ENCODE measurements at regions of chr16 and their contacts with region 1.

Region 1: DNA sequence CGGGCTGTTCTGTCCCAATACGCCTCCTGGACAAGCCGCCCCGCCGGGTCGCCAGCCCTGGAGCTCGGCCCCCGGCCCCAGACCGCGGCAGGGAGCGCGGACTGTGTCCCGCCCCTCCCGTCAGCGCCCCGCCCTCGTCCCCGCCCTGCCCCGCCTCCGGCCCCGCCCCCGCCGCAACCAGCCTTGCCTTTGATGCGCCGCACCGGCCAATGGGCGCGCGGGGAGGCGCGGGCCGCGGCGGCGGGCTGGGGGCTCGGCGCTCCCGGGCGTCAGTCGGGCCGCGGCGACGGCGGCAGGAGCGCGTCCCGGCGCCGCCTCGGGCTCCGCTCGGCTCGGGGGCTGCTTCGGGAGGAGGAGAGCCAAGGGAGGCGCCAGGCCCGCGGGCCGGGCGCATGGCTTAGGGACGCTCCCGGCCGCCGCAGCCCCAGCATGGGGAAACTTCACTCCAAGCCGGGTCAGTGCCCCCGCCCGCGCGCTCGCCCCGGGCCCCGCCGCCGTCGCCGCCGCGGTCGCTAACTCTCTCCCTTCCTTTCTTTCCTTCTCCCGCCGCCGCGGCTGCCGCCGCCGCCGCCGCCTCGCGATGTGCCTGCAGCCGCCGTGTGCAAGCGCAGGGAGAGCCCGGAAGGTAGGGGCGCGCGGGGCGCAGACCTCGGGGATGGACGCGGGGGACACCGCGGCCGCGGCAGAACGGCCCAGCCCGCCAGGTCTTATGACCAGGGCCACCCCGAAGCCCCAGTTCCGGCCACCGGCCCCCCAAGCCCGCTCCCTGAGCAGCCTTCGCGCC is at the start of gene NKD1:
- DNase-seq: peak; percentile 87
- ATAC-seq: peak; percentile 84
- H3K4me3 Mint-ChIP-seq: peak within 1 kb of the TSS; percentile 81
- H3K27ac Mint-ChIP-seq: no peak within 1 kb of the TSS
- H3K4me1 Mint-ChIP-seq: peaks cover 28% of the 10 kb centered on the region
- H3K27me3 Mint-ChIP-seq: no peaks in the 10 kb centered on the region
- total RNA-seq, gene NKD1: 1.8 to 3.1 TPM

Region 2: GRCh38 chr16:50065624-50066481 is 482.5 kb before region 1 on chr16 and contains the start of gene HEATR3:
- CTCF ChIA-PET with region 1: no interaction called
- POLR2A ChIA-PET with region 1: no interaction called
- intact Hi-C with region 1: loop called in 1 of 2 experiments (anchors 1 kb)
- DNase-seq: peak; percentile 97
- ATAC-seq: peak; percentile 86
- H3K4me3 Mint-ChIP-seq: peak within 1 kb of the TSS; percentile 87
- H3K27ac Mint-ChIP-seq: peak within 1 kb of the TSS; percentile 88
- H3K4me1 Mint-ChIP-seq: peaks cover 33% of the 10 kb centered on the region
- H3K27me3 Mint-ChIP-seq: no peaks in the 10 kb centered on the region
- total RNA-seq, gene HEATR3: 22.2 to 28.7 TPM

Region 3: DNA sequence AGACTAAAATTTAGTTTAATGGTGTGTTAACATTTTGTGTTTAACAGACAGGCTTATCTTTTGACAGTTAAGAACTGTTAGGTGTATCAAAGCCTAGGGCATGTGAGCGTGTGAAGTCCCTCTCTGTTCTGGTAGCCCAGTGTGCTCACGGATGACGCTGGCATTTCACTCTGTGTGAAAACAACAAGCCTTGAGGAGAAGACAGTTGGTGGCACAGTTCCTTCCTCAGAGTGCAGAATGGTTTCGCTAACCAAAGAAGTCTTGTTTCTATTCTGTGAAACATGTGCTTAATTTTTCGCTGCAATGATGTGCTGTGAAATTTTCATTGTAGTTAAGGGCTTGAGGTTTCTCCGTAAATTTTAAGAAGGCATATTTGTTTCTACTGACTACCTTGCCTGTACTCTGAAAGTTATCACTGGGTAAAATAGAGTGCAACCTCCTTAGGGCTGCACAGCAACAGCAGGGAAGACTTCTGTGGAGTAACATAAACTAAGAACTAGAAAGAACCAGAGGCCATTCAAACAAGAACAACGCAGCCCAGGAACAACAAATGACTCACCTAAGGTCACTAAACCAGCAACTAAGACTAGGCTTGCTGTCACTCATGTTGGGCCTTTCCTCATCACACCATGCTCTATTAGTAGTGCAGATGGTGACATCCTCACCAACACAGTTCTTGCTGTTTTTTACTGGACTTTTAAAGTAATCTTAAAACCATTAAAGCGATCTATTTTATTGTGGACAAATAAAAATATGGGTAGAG is 212.9 kb before region 1 on chr16:
- CTCF ChIA-PET with region 1: no interaction called
- POLR2A ChIA-PET with region 1: no interaction called
- intact Hi-C with region 1: loop called in 1 of 2 experiments (anchors 1 kb)
- DNase-seq: peak; percentile 74
- ATAC-seq: peak; percentile 65
- H3K4me3 Mint-ChIP-seq: peak overlapping the region; percentile 41
- H3K27ac Mint-ChIP-seq: peak overlapping the region; percentile 94
- H3K4me1 Mint-ChIP-seq: peaks cover 73% of the 10 kb centered on the region
- H3K27me3 Mint-ChIP-seq: no peaks in the 10 kb centered on the region

Region 4: DNA sequence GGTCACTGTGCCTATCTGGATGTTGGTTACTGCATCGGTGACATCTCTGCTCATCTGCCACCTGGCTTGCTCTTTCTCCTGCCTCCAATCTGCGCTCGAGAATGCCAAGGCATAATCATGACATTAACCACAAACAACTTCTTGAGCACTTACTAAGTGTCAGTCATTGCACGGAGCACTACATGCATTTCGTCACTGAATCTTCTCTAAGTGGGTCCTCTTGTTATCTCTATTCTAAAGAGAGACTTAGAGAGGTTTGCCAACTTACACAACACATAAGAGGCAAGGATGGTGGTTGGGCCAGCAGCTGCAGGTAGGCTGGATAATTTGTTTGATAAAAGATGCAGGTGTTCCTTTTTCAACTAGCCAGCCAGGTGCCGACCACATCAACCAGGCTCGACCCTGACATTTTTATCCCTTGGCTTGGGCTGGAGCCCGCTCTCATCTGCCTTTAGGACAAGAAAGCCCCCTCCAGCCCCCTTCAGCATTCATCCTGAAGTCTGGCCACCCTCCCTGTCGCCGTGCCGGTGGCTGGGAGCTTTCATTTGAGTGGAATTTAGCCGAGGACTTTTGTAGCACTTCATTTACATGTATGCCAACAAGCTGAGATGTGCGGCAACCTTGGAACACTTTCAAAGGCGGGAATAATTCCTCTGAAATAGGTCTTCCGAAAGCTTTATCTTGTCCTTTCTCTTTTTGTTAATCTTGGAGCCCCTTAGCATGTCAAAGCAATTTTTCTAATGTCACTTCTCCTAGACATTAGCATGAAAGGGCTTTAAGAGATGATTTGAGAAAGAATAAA is 89.4 kb before region 1 on chr16:
- CTCF ChIA-PET with region 1: no interaction called
- POLR2A ChIA-PET with region 1: no interaction called
- intact Hi-C with region 1: no loop called
- DNase-seq: no peak
- ATAC-seq: no peak
- H3K4me3 Mint-ChIP-seq: no peak overlapping the region
- H3K27ac Mint-ChIP-seq: no peak overlapping the region
- H3K4me1 Mint-ChIP-seq: peaks cover 10% of the 10 kb centered on the region
- H3K27me3 Mint-ChIP-seq: peaks cover 4% of the 10 kb centered on the region

Region 5: DNA sequence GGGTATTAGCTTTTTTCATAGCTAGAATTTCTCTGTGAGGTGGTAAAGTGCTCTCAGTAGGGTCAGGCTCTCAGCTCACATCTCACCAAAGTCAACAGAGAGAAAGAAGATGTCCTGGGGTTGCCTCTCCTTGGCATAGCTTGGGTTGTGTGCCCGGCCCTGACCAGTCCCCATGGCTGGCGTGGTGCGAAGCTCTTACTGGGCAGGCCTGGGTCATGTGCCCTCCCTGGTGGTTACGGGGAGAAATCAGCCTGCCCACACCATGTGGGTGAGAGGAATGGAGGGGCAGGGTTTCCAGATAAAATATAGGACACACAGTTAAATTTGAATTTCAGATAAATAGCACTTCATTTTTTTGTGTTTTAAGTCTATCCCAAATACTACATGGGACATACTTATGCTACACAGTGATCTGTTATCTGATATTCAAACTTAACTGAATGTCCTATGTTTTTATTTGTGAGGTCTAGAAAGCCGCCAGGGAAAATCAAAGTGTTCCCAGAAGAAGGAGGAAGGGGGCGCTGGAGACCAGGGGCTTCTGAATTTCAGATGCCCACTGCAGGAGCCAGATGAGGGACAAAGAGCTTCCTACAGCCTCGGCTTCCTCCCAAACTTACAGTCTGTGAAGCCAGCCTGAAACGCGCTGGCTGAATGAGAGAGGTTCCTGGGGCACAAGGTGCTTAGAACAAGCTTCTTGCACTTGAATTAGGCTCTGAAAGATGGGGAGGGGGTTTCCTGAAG is 45.3 kb after region 1 on chr16:
- CTCF ChIA-PET with region 1: no interaction called
- POLR2A ChIA-PET with region 1: no interaction called
- intact Hi-C with region 1: loop called in 1 of 2 experiments (anchors 1 kb)
- DNase-seq: no peak
- ATAC-seq: no peak
- H3K4me3 Mint-ChIP-seq: no peak overlapping the region
- H3K27ac Mint-ChIP-seq: no peak overlapping the region
- H3K4me1 Mint-ChIP-seq: peaks cover 35% of the 10 kb centered on the region
- H3K27me3 Mint-ChIP-seq: no peaks in the 10 kb centered on the region

Region 6: GRCh38 chr16:50657241-50657640 is 108.9 kb after region 1 on chr16:
- CTCF ChIA-PET with region 1: no interaction called
- POLR2A ChIA-PET with region 1: no interaction called
- intact Hi-C with region 1: no loop called
- DNase-seq: no peak
- ATAC-seq: no peak
- H3K4me3 Mint-ChIP-seq: no peak overlapping the region
- H3K27ac Mint-ChIP-seq: no peak overlapping the region
- H3K4me1 Mint-ChIP-seq: no peaks in the 10 kb centered on the region
- H3K27me3 Mint-ChIP-seq: no peaks in the 10 kb centered on the region

Region 7: DNA sequence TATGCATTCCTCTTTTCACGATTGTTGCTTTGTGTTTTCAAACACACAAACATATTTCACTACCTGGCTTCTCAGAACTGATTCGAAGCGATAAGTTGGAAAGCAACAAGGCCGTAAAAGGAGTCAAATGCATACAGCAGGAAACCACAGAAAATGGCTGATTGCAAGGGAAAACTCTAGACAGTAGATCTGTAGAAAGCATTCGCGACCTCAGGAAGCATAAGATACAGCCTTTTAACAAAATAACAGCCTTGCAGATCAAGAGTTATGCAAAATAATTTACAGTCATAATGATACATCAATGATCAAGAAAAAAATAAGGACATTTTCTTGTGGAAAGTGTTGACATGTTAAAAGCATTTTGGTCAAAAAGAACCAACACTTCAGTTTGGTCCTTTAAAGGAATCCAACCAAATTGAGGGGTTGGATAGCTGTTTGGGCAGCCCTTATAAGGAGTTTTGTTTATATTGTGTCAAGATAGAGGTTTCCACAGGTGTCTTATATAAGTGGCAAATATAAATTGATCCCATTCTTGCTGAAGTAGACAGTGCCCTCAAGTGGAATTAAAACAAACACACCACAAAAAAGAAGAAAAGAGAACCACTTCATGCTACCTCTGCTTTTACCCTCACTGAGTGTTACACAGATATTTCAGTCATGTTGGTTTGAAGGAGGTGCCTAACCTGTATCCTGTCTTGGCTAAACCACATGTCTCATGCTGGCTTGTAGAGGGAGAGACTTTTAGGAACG is 199.1 kb after region 1 on chr16:
- CTCF ChIA-PET with region 1: interaction called, 3 read pairs
- POLR2A ChIA-PET with region 1: no interaction called
- intact Hi-C with region 1: loop called (anchors 1 to 5 kb)
- DNase-seq: no peak
- ATAC-seq: peak; percentile 74
- H3K4me3 Mint-ChIP-seq: peak overlapping the region; percentile 68
- H3K27ac Mint-ChIP-seq: peak overlapping the region; percentile 88
- H3K4me1 Mint-ChIP-seq: peaks cover 66% of the 10 kb centered on the region
- H3K27me3 Mint-ChIP-seq: no peaks in the 10 kb centered on the region

Region 8: GRCh38 chr16:51255349-51255972 is 707.1 kb after region 1 on chr16:
- CTCF ChIA-PET with region 1: no interaction called
- POLR2A ChIA-PET with region 1: no interaction called
- intact Hi-C with region 1: no loop called
- DNase-seq: no peak
- ATAC-seq: no peak
- H3K4me3 Mint-ChIP-seq: no peak overlapping the region
- H3K27ac Mint-ChIP-seq: no peak overlapping the region
- H3K4me1 Mint-ChIP-seq: no peaks in the 10 kb centered on the region
- H3K27me3 Mint-ChIP-seq: no peaks in the 10 kb centered on the region

Measured in activated CD4-positive, alpha-beta T cell treated with anti-CD3 and anti-CD28 coated beads for 36 hours (primary cell).